CD4-positive, alpha-beta T cell (primary cell): ENCODE measurements at regions of chr6 and their contacts with region 1.

Region 1: GRCh38 chr6:8219352-8219943 is 117.1 kb upstream of the EEF1E1 start:
- DNase-seq: peak in 10 of 14 experiments; percentile 1 to 70 (median 14)
- ATAC-seq: peak; percentile 52
- H3K4me3 ChIP-seq: no peak overlapping the region
- H3K4me3 Mint-ChIP-seq: no peak overlapping the region
- H3K27ac ChIP-seq: no peak overlapping the region
- H3K27ac Mint-ChIP-seq: no peak overlapping the region
- H3K4me1 ChIP-seq: no peaks in the 10 kb centered on the region
- H3K4me1 Mint-ChIP-seq: no peaks in the 10 kb centered on the region
- H3K27me3 ChIP-seq: peaks cover 0 to 5% of the 10 kb centered on the region in 2 experiments
- H3K27me3 Mint-ChIP-seq: peaks cover 20% of the 10 kb centered on the region
- CTCF ChIP-seq: peak; percentile 88

Region 2: DNA sequence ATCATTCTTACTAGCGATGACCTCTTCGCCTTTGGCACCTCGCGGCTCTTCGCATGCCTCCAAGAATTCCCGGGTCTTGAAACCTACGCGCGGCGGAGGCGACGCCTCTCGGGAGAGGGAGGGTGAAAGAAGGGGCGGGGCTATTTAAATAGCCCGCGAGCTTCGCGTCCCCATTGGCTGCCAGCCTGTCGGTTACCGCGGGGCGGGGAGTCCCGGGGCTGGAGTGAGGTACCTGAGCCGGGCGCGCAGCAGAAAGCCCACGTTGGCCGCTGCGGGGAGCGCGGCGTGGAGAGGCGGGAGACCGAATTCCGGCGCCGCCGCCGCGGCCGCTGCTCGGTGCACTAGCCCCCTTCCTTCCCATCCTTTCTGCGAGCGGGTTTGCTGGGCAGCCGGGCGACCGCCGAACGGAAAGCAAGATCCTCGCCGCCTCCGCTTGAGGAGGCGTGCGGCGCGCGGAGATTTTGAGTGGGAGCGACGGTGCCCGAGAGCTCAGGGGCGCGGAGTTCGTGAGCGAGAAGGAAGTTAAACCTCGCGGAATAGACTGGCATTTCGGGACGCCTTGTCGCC is 493.5 kb before region 1 on chr6 and contains the start of gene BMP6:
- CTCF ChIA-PET with region 1: interaction called, 3 read pairs
- POLR2A ChIA-PET with region 1: no interaction called
- intact Hi-C with region 1: loop called in 1 of 2 experiments (anchors 2 kb)
- DNase-seq: peak in 12 of 14 experiments; percentile 5 to 68 (median 40)
- ATAC-seq: peak; percentile 77
- H3K4me3 ChIP-seq: peak within 1 kb of the TSS; percentile 34
- H3K4me3 Mint-ChIP-seq: peak within 1 kb of the TSS; percentile 83
- H3K27ac ChIP-seq: no peak within 1 kb of the TSS
- H3K27ac Mint-ChIP-seq: no peak within 1 kb of the TSS
- H3K4me1 ChIP-seq: peaks cover 28% of the 10 kb centered on the region
- H3K4me1 Mint-ChIP-seq: peaks cover 11% of the 10 kb centered on the region
- H3K27me3 ChIP-seq: peaks cover 53 to 54% of the 10 kb centered on the region in 2 experiments
- H3K27me3 Mint-ChIP-seq: peaks cover 80% of the 10 kb centered on the region
- CTCF ChIP-seq: no peak
- total RNA-seq, gene BMP6: not detected

Region 3: GRCh38 chr6:7899101-7899888 is 320.2 kb before region 1 on chr6:
- CTCF ChIA-PET with region 1: no interaction called
- POLR2A ChIA-PET with region 1: no interaction called
- intact Hi-C with region 1: loop called in 1 of 2 experiments (anchors 2 kb)
- DNase-seq: peak in 3 of 14 experiments; percentile 6 to 10 (median 7)
- ATAC-seq: no peak
- H3K4me3 ChIP-seq: no peak overlapping the region
- H3K4me3 Mint-ChIP-seq: no peak overlapping the region
- H3K27ac ChIP-seq: no peak overlapping the region
- H3K27ac Mint-ChIP-seq: no peak overlapping the region
- H3K4me1 ChIP-seq: no peaks in the 10 kb centered on the region
- H3K4me1 Mint-ChIP-seq: no peaks in the 10 kb centered on the region
- H3K27me3 ChIP-seq: no peaks in the 10 kb centered on the region
- H3K27me3 Mint-ChIP-seq: no peaks in the 10 kb centered on the region
- CTCF ChIP-seq: no peak

Region 4: GRCh38 chr6:8131256-8131897 is 88.1 kb before region 1 on chr6:
- CTCF ChIA-PET with region 1: interaction called, 4 read pairs
- POLR2A ChIA-PET with region 1: interaction called, 4 read pairs
- intact Hi-C with region 1: loop called (anchors 1 to 2 kb)
- DNase-seq: peak in 11 of 14 experiments; percentile 1 to 61 (median 6)
- ATAC-seq: peak; percentile 46
- H3K4me3 ChIP-seq: no peak overlapping the region
- H3K4me3 Mint-ChIP-seq: no peak overlapping the region
- H3K27ac ChIP-seq: no peak overlapping the region
- H3K27ac Mint-ChIP-seq: no peak overlapping the region
- H3K4me1 ChIP-seq: no peaks in the 10 kb centered on the region
- H3K4me1 Mint-ChIP-seq: no peaks in the 10 kb centered on the region
- H3K27me3 ChIP-seq: peaks cover 4 to 5% of the 10 kb centered on the region in 2 experiments
- H3K27me3 Mint-ChIP-seq: peaks cover 39% of the 10 kb centered on the region
- CTCF ChIP-seq: no peak